Heart left ventricle (tissue), 16 donors: ENCODE measurements at regions of chr22 and their contacts with region 1.

Region 1: GRCh38 chr22:19438298-19438697 is 6.0 kb downstream of the MRPL40 start:
- DNase-seq: no peak
- ATAC-seq: no peak
- H3K4me3 ChIP-seq: no peak overlapping the region
- H3K27ac ChIP-seq: no peak overlapping the region
- H3K4me1 ChIP-seq: peaks cover 2 to 32% (median 11%) of the 10 kb centered on the region in 12 donors
- H3K27me3 ChIP-seq: no peaks in the 10 kb centered on the region
- CTCF ChIP-seq: no peak
- POLR2A ChIP-seq: no peak

Region 2: GRCh38 chr22:19473578-19473977 is 35.3 kb after region 1 on chr22:
- intact Hi-C with region 1: loop called in 6 of 10 experiments (anchors 2 to 5 kb)
- DNase-seq: no peak
- ATAC-seq: no peak
- H3K4me3 ChIP-seq: no peak overlapping the region
- H3K27ac ChIP-seq: no peak overlapping the region
- H3K4me1 ChIP-seq: peaks cover 6 to 24% (median 16%) of the 10 kb centered on the region in 12 donors
- H3K27me3 ChIP-seq: no peaks in the 10 kb centered on the region
- CTCF ChIP-seq: peak in 1 of 12 donors; percentile 9
- POLR2A ChIP-seq: no peak